Activated CD8-positive, alpha-beta T cell treated with anti-CD3 and anti-CD28 coated beads for 36 hours (primary cell): ENCODE measurements at regions of chr17 and their contacts with region 1.

Region 1: DNA sequence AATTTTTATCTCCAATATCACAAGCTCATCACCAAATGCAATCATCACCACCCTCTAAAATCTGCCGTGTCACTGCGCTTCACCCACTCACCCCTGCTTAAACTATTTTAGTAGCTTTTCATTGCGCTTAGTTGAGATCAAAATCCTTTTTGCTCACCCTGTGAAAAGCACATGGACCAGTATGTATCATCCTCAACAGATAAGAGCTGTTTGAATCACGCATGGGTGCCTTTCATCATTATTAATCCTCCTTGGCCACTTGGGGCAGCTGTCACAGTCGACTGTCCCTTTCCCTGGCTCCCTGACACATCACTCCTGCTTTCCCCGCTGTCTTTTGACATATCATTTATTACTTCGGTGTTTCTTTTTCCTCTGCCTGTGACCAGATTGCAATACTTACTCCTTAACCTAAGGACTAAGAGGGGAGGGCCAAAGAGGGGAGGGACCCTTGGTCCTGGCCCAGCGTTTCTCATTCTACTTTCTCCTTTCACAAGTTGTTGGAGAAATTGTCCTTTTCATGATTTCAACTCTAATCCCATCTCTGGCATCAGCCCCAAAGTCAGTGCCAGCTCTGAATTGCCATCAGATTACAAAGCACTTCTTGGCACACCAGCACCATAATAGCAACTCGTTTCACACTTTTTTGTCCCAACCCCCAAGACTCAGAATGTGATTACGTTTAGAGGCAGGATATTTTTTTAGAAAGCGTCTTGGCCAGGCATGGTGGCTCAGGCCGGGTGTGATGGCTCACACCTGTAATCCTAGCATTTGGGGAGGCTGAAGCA is 8.6 kb upstream of the KDM6B start:
- DNase-seq: no peak
- ATAC-seq: peak; percentile 20
- H3K4me3 Mint-ChIP-seq: no peak overlapping the region
- H3K27ac Mint-ChIP-seq: no peak overlapping the region
- H3K4me1 Mint-ChIP-seq: peaks cover 2% of the 10 kb centered on the region
- H3K27me3 Mint-ChIP-seq: peaks cover 2% of the 10 kb centered on the region
- CTCF ChIP-seq: peak; percentile 29

Region 2: DNA sequence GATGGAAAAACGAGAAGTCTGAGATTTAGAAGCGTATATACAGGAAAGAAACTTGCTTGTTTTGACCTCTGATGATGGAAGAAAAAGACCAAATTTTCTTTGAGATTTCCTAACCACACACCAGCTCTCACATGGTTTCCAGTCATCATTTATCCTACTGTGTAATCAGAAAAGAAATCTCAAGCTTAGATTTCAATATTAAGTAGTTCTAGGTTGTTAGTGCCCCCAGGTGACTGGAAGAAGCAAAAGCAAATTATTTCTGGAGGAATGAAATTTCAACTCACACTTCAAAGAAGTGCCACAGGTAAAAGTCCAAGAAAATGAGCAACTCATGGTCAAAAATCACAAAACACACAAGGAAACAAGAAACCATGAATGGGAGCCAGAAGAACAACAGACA is 43.2 kb before region 1 on chr17:
- CTCF ChIA-PET with region 1: no interaction called
- POLR2A ChIA-PET with region 1: no interaction called
- intact Hi-C with region 1: no loop called
- DNase-seq: no peak
- ATAC-seq: no peak
- H3K4me3 Mint-ChIP-seq: no peak overlapping the region
- H3K27ac Mint-ChIP-seq: no peak overlapping the region
- H3K4me1 Mint-ChIP-seq: no peaks in the 10 kb centered on the region
- H3K27me3 Mint-ChIP-seq: peaks cover 2% of the 10 kb centered on the region
- CTCF ChIP-seq: no peak

Region 3: GRCh38 chr17:7811251-7811650 is 14.1 kb before region 1 on chr17:
- CTCF ChIA-PET with region 1: interaction called, 13 read pairs
- POLR2A ChIA-PET with region 1: no interaction called
- intact Hi-C with region 1: no loop called
- DNase-seq: no peak
- ATAC-seq: no peak
- H3K4me3 Mint-ChIP-seq: no peak overlapping the region
- H3K27ac Mint-ChIP-seq: no peak overlapping the region
- H3K4me1 Mint-ChIP-seq: peaks cover 6% of the 10 kb centered on the region
- H3K27me3 Mint-ChIP-seq: peaks cover 3% of the 10 kb centered on the region
- CTCF ChIP-seq: no peak

Region 4: DNA sequence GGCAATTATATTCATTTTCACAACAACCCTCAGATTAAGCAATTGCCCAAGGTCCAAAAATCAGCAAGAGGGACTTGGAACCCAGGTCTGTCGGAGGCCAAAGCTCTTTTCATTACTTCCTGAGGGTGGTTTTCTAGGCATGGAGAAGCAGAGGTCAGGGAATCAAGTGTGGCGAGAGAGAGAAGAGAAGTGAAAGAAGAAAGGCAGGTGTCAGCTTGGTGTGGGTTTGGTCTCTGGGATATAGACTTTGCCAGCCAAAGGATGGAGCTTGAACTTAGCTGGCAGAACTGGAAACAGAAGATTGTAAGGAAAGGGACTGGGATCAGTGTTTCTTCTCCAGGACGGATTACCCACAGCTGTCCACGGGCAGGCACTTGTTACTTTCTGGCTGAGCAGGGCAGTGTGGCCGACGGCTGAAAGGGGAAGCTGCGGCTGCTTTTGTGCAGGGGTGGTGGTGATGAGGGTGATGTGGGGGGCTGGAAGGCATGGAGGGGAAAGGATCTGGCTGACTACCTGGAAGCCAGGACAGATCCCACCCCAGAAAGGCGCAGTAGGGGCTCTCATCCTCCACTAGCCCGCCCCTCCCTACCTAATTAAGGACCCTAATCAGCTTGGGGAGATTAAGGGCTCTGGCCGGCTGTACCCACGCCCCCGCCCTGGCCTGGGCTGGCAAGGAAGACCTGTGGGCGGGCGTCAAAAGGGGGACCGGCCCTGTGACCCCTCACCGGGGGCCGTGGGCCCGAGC is 176.8 kb after region 1 on chr17 and contains the start of gene GUCY2D:
- CTCF ChIA-PET with region 1: no interaction called
- POLR2A ChIA-PET with region 1: no interaction called
- intact Hi-C with region 1: no loop called
- DNase-seq: no peak
- ATAC-seq: no peak
- H3K4me3 Mint-ChIP-seq: peak within 1 kb of the TSS; percentile 2
- H3K27ac Mint-ChIP-seq: no peak within 1 kb of the TSS
- H3K4me1 Mint-ChIP-seq: peaks cover 8% of the 10 kb centered on the region
- H3K27me3 Mint-ChIP-seq: peaks cover 39% of the 10 kb centered on the region
- CTCF ChIP-seq: no peak
- total RNA-seq, gene GUCY2D: not detected